CD4-positive, alpha-beta memory T cell (primary cell): ENCODE measurements at regions of chr6 and their contacts with region 1.

Region 1: DNA sequence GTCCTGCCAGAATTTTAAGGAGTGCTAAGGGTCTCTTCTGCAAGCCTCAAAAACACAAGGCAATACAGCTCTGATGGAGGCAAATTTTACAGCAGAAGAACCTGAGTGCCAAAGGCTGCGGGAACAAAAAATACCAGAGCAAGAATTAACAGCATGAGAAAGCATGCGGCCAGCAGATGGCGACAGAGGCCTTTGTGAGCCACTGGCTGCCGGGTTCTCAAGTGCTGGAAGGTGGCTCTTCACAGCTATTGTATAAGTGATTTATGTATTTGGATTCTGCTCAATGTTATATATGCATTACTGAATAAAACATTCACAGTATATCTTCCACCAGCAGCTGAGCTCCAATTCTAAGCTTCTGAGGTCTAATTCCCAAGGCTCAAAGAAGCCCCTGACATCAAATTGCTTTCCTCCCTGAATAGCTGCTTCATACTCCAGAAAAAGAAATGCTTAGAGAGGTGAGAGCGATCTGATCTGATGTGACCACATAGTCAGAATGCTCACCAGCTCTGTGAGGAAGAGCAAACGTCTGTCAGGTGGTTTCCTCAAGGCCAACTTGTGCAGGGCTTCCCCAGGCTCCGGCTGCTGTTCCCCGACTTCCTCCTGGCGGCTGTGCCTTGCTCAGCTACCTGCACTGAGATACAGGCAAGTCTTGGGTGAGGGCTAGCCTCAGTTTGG is 58.6 kb downstream of the PPP1R3G start:
- DNase-seq: peak; percentile 66 to 76 (median 75)
- H3K4me3 ChIP-seq: no peak overlapping the region
- H3K4me3 Mint-ChIP-seq: no peak overlapping the region
- H3K27ac ChIP-seq: no peak overlapping the region
- H3K27ac Mint-ChIP-seq: no peak overlapping the region
- H3K4me1 ChIP-seq: no peaks in the 10 kb centered on the region
- H3K4me1 Mint-ChIP-seq: peaks cover 0 to 1% (median 0%) of the 10 kb centered on the region in 4 donors
- H3K27me3 ChIP-seq: no peaks in the 10 kb centered on the region
- H3K27me3 Mint-ChIP-seq: no peaks in the 10 kb centered on the region

Region 2: GRCh38 chr6:5095236-5095635 is 48.5 kb before region 1 on chr6:
- CTCF ChIA-PET with region 1: no interaction called
- POLR2A ChIA-PET with region 1: no interaction called
- intact Hi-C with region 1: no loop called
- DNase-seq: no peak
- H3K4me3 ChIP-seq: no peak overlapping the region
- H3K4me3 Mint-ChIP-seq: no peak overlapping the region
- H3K27ac ChIP-seq: no peak overlapping the region
- H3K27ac Mint-ChIP-seq: no peak overlapping the region
- H3K4me1 ChIP-seq: no peaks in the 10 kb centered on the region
- H3K4me1 Mint-ChIP-seq: peaks cover 0 to 7% (median 1%) of the 10 kb centered on the region in 4 donors
- H3K27me3 ChIP-seq: no peaks in the 10 kb centered on the region
- H3K27me3 Mint-ChIP-seq: peaks cover 12 to 17% of the 10 kb centered on the region in 2 donors

Region 3: DNA sequence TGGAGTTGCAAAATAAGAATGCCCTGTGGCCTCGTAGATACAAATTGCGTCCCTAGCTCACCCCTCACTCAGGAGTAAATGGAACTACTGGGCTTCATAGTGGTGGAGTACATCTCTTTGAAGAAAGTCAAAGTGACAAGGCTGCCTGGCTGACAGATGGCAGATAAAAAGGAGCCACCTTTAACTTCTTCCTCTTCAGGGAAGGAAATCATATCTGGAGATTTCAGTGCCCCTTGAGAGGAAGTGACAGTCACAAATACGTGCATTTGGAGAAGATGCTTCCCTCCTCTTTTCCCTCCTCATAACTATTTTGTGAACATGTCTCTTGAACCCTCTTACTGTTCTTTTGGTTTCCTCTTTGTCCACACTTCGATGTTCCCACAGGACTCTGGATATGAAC is 15.4 kb before region 1 on chr6:
- CTCF ChIA-PET with region 1: interaction called, 11 read pairs
- POLR2A ChIA-PET with region 1: no interaction called
- intact Hi-C with region 1: no loop called
- DNase-seq: no peak
- H3K4me3 ChIP-seq: no peak overlapping the region
- H3K4me3 Mint-ChIP-seq: no peak overlapping the region
- H3K27ac ChIP-seq: no peak overlapping the region
- H3K27ac Mint-ChIP-seq: no peak overlapping the region
- H3K4me1 ChIP-seq: no peaks in the 10 kb centered on the region
- H3K4me1 Mint-ChIP-seq: no peaks in the 10 kb centered on the region
- H3K27me3 ChIP-seq: no peaks in the 10 kb centered on the region
- H3K27me3 Mint-ChIP-seq: no peaks in the 10 kb centered on the region

Region 4: GRCh38 chr6:5174244-5174643 is 30.5 kb after region 1 on chr6:
- CTCF ChIA-PET with region 1: interaction called, 14 read pairs
- POLR2A ChIA-PET with region 1: interaction called, 7 read pairs
- intact Hi-C with region 1: loop called (anchors 2 kb)
- DNase-seq: peak; percentile 62 to 74 (median 72)
- H3K4me3 ChIP-seq: peak overlapping the region in 1 of 2 donors; percentile 4
- H3K4me3 Mint-ChIP-seq: peak overlapping the region; percentile 61 to 78 (median 70)
- H3K27ac ChIP-seq: peak overlapping the region; percentile 50
- H3K27ac Mint-ChIP-seq: peak overlapping the region; percentile 60 to 90 (median 82)
- H3K4me1 ChIP-seq: peaks cover 33% of the 10 kb centered on the region
- H3K4me1 Mint-ChIP-seq: peaks cover 30 to 43% (median 37%) of the 10 kb centered on the region in 4 donors
- H3K27me3 ChIP-seq: no peaks in the 10 kb centered on the region
- H3K27me3 Mint-ChIP-seq: no peaks in the 10 kb centered on the region

Region 5: DNA sequence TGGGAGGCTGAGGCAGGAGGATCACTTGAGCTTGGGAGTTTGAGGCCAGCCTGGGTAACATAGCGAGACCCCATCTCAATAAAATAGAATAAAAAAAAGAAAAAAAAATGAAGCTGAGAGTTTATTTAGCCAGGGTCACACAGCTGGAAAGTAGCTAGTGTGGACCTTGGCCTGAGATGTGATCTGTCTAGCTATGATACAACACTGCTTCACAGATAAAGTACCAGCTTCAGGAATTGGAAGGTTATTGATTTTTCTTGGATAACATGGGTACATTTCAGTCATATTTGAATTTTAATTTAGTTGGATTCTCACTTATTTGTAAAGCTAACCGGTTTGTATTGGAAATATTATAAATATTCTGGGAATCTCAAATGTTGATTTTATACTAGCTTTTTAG is 122.7 kb after region 1 on chr6:
- CTCF ChIA-PET with region 1: interaction called, 10 read pairs
- POLR2A ChIA-PET with region 1: interaction called, 5 read pairs
- intact Hi-C with region 1: loop called (anchors 1 kb)
- DNase-seq: no peak
- H3K4me3 ChIP-seq: no peak overlapping the region
- H3K4me3 Mint-ChIP-seq: no peak overlapping the region
- H3K27ac ChIP-seq: no peak overlapping the region
- H3K27ac Mint-ChIP-seq: peak overlapping the region in 1 of 7 donors; percentile 43
- H3K4me1 ChIP-seq: peaks cover 11% of the 10 kb centered on the region
- H3K4me1 Mint-ChIP-seq: peaks cover 10 to 26% (median 20%) of the 10 kb centered on the region in 4 donors
- H3K27me3 ChIP-seq: no peaks in the 10 kb centered on the region
- H3K27me3 Mint-ChIP-seq: no peaks in the 10 kb centered on the region

Region 6: DNA sequence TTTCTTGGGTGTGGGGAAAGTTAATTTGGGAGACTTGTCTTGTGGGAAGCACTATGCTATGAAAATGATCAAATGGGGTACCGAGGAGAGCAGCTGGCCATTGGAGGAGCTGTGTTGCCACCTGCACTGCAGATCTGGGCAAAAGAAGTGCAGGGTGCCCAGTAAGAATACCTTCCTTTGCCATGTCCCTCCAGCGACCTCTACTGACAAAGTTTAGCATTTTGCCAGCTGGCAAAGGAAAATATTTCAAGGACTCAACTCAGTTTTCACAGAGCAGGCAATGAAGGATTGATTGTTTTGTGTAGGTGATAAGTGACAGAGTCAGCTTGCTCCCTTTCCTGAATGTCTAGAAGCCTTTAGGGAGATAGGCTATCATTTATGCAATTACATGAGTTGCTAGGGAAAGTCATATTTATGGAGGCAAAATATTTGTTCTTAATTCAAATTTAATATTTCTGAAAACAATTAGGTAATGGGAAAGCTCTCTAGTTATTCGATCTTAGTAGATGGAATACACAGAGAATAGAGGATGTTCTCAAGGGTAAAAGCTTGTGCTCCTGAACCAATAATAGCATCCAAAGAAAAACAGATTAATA is 236.0 kb after region 1 on chr6:
- CTCF ChIA-PET with region 1: interaction called, 13 read pairs
- POLR2A ChIA-PET with region 1: no interaction called
- intact Hi-C with region 1: no loop called
- DNase-seq: peak in 1 of 5 donors; percentile 25
- H3K4me3 ChIP-seq: no peak overlapping the region
- H3K4me3 Mint-ChIP-seq: no peak overlapping the region
- H3K27ac ChIP-seq: no peak overlapping the region
- H3K27ac Mint-ChIP-seq: no peak overlapping the region
- H3K4me1 ChIP-seq: no peaks in the 10 kb centered on the region
- H3K4me1 Mint-ChIP-seq: peaks cover 8 to 13% (median 11%) of the 10 kb centered on the region in 4 donors
- H3K27me3 ChIP-seq: no peaks in the 10 kb centered on the region
- H3K27me3 Mint-ChIP-seq: no peaks in the 10 kb centered on the region

Region 7: GRCh38 chr6:6008648-6009421 is 865.1 kb after region 1 on chr6:
- CTCF ChIA-PET with region 1: no interaction called
- POLR2A ChIA-PET with region 1: no interaction called
- intact Hi-C with region 1: loop called (anchors 2 kb)
- DNase-seq: peak in 1 of 5 donors; percentile 33
- H3K4me3 ChIP-seq: peak overlapping the region; percentile 43 to 52
- H3K4me3 Mint-ChIP-seq: peak overlapping the region; percentile 73 to 90 (median 80)
- H3K27ac ChIP-seq: no peak overlapping the region
- H3K27ac Mint-ChIP-seq: peak overlapping the region in 2 of 7 donors; percentile 73 to 88
- H3K4me1 ChIP-seq: peaks cover 40% of the 10 kb centered on the region
- H3K4me1 Mint-ChIP-seq: peaks cover 21 to 52% (median 38%) of the 10 kb centered on the region in 4 donors
- H3K27me3 ChIP-seq: peaks cover 57% of the 10 kb centered on the region
- H3K27me3 Mint-ChIP-seq: peaks cover 43 to 49% of the 10 kb centered on the region in 2 donors